ENCODE measurements at regions of chr15 and their contacts with region 1.

Region 1: GRCh38 chr15:43483306-43484128 is 9.4 kb downstream of the TP53BP1 start:
- DNase-seq: no peak
- H3K4me3 ChIP-seq: no peak overlapping the region
- H3K27ac ChIP-seq: peak overlapping the region; percentile 23
- H3K4me1 ChIP-seq: peaks cover 9% of the 10 kb centered on the region
- H3K27me3 ChIP-seq: no peaks in the 10 kb centered on the region
- CTCF ChIP-seq: peak in 1 of 3 experiments; percentile 39
- POLR2A ChIP-seq: no peak

Region 2: GRCh38 chr15:43376017-43376705 is 107.4 kb before region 1 on chr15:
- intact Hi-C with region 1: no loop called
- DNase-seq: no peak
- H3K4me3 ChIP-seq: no peak overlapping the region
- H3K27ac ChIP-seq: no peak overlapping the region
- H3K4me1 ChIP-seq: peaks cover 15% of the 10 kb centered on the region
- H3K27me3 ChIP-seq: no peaks in the 10 kb centered on the region
- CTCF ChIP-seq: peak in 2 of 3 experiments; percentile 17 to 21
- POLR2A ChIP-seq: no peak

Region 3: GRCh38 chr15:43414196-43414595 is 69.3 kb before region 1 on chr15:
- intact Hi-C with region 1: no loop called
- DNase-seq: no peak
- H3K4me3 ChIP-seq: no peak overlapping the region
- H3K27ac ChIP-seq: no peak overlapping the region
- H3K4me1 ChIP-seq: no peaks in the 10 kb centered on the region
- H3K27me3 ChIP-seq: no peaks in the 10 kb centered on the region
- CTCF ChIP-seq: no peak
- POLR2A ChIP-seq: no peak

Region 4: GRCh38 chr15:43440721-43441281 is 42.7 kb before region 1 on chr15:
- intact Hi-C with region 1: loop called (anchors 2 kb)
- DNase-seq: peak in 1 of 2 donors; percentile 89
- H3K4me3 ChIP-seq: no peak overlapping the region
- H3K27ac ChIP-seq: peak overlapping the region; percentile 42
- H3K4me1 ChIP-seq: peaks cover 9% of the 10 kb centered on the region
- H3K27me3 ChIP-seq: no peaks in the 10 kb centered on the region
- CTCF ChIP-seq: peak; percentile 27 to 82 (median 71)
- POLR2A ChIP-seq: no peak

Region 5: GRCh38 chr15:43520138-43520537 is 36.6 kb after region 1 on chr15:
- intact Hi-C with region 1: loop called (anchors 2 kb)
- DNase-seq: no peak
- H3K4me3 ChIP-seq: no peak overlapping the region
- H3K27ac ChIP-seq: no peak overlapping the region
- H3K4me1 ChIP-seq: peaks cover 27% of the 10 kb centered on the region
- H3K27me3 ChIP-seq: no peaks in the 10 kb centered on the region
- CTCF ChIP-seq: no peak
- POLR2A ChIP-seq: no peak

Measured in vagina (tissue), 2 donors.